Activated naive CD4-positive, alpha-beta T cell treated with anti-CD3 and anti-CD28 coated beads for 36 hours (primary cell): ENCODE measurements at regions of chr14 and their contacts with region 1.

Region 1: DNA sequence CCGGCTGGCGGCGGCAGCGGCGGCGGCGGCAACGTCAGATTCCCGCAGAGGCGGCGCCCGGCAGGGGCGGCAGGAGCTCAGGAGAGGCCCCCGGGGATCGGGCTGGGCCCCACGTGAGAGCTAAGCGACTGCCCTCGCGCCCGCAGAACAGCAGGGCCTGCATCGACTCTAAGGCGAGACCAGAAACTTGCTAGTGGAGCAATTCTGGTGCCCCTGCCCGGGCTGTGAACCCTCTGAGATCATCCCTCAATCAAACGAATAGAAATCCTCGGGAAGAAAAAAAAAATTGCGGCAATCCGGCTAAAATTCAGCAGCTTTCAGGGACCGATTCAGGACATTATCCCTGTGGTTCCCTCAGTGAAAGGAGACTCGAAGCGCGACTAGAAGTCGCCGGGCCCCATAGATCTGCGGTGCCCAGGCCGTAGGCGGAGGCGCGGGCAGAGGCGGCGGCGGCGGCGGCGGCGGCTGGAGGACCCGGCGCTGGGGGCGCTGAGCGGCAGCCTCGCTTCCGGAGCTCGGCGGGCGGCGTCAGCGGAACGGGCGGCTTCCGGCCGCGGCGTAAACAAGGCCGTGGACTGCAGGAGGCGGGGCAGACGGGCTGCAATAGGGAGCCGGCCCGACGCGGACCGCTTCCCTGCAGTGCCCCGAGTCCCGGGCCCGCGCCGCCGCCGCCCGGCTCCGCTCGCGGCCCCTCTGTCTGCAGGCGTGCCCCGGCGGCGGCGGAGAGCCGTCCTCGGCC is at the start of gene KLHDC2:
- DNase-seq: peak; percentile 91
- H3K4me3 Mint-ChIP-seq: peak within 1 kb of the TSS; percentile 94
- H3K27ac Mint-ChIP-seq: peak within 1 kb of the TSS; percentile 99
- H3K4me1 Mint-ChIP-seq: peaks cover 34% of the 10 kb centered on the region
- H3K27me3 Mint-ChIP-seq: no peaks in the 10 kb centered on the region
- total RNA-seq, gene KLHDC2: 24.3 to 25.0 TPM

Region 2: GRCh38 chr14:49585803-49586672 is 181.7 kb before region 1 on chr14 and contains the start of gene RPS29:
- CTCF ChIA-PET with region 1: no interaction called
- intact Hi-C with region 1: loop called (anchors 1 kb)
- DNase-seq: peak; percentile 99
- H3K4me3 Mint-ChIP-seq: peak within 1 kb of the TSS; percentile 87
- H3K27ac Mint-ChIP-seq: peak within 1 kb of the TSS; percentile 98
- H3K4me1 Mint-ChIP-seq: peaks cover 40% of the 10 kb centered on the region
- H3K27me3 Mint-ChIP-seq: peaks cover 3% of the 10 kb centered on the region
- total RNA-seq, gene RPS29: 1,858 to 2,382 TPM

Region 3: GRCh38 chr14:49620182-49621113 is 147.3 kb before region 1 on chr14 and contains the starts of genes MGAT2 and RPL36AL:
- CTCF ChIA-PET with region 1: interaction called, 5 read pairs
- intact Hi-C with region 1: loop called (anchors 1 kb)
- DNase-seq: peak; percentile 97
- H3K4me3 Mint-ChIP-seq: peak within 1 kb of the TSS; percentile 97
- H3K27ac Mint-ChIP-seq: peak within 1 kb of the TSS; percentile 97
- H3K4me1 Mint-ChIP-seq: peaks cover 52% of the 10 kb centered on the region
- H3K27me3 Mint-ChIP-seq: no peaks in the 10 kb centered on the region
- total RNA-seq, gene MGAT2: 20.6 to 20.7 TPM
- total RNA-seq, gene RPL36AL: 250 to 266 TPM

Region 4: DNA sequence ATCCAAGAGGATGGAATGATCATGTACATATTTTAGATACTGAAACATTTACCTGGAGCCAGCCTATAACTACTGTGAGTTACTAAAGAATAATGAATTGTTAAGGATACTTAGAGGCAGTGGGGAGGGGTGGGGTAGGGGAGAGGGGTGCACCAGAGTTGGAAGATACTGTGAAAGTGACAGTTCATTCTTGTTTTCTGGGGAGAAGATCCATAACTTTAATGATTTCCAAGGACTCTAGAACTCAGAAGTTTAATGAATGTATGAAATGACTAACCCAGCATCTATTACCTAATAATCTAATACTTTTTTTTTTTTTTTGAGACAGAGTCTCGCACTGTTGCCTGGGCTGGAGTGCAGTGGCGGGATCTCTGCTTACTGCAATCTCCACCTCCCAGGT is 10.7 kb after region 1 on chr14:
- CTCF ChIA-PET with region 1: no interaction called
- intact Hi-C with region 1: no loop called
- DNase-seq: no peak
- H3K4me3 Mint-ChIP-seq: no peak overlapping the region
- H3K27ac Mint-ChIP-seq: no peak overlapping the region
- H3K4me1 Mint-ChIP-seq: peaks cover 7% of the 10 kb centered on the region
- H3K27me3 Mint-ChIP-seq: no peaks in the 10 kb centered on the region

Region 5: DNA sequence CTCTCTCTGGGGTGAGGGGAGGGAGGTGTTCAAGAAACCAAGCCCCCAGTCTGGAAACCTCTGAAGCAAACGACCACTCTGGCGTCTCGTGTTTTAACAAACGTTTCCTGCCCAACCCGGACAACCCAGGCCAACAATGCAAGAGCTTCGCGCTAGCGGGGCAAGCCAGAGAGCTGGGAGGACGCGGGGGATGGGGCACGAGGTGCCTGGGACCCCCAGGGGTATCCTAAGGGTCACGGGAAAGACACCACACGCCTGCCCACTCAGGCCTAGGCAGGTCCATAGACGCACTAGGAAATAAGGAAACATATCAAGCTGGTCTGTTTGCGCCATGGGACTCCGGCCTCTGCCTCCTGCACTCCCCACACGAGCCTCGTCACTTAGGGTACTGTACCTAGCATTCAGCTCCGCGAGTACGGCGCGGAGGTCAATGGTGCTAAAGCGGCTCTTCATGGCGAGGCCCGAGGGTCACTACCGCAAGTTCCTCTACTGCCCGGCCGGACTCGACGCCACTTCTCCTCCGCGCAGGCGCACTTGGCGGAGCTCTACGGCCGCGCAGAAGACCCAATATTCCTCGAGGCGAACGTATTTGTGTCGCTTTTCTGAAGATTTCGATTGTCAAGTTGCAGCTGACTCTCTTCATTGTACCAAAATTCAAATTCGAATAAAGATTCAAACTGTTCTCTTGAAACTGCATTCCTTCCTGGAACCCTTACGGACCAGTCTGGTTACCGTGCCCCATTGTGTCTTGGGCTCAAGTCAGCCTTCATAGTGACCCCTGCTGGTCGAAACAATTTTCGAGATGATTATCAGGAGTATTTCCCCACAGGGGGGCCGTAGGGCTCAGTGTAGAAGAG is 84.8 kb after region 1 on chr14 and contains the start of gene NEMF:
- CTCF ChIA-PET with region 1: interaction called, 4 read pairs
- intact Hi-C with region 1: loop called (anchors 1 kb)
- DNase-seq: peak; percentile 90
- H3K4me3 Mint-ChIP-seq: peak within 1 kb of the TSS; percentile 98
- H3K27ac Mint-ChIP-seq: peak within 1 kb of the TSS; percentile 97
- H3K4me1 Mint-ChIP-seq: peaks cover 37% of the 10 kb centered on the region
- H3K27me3 Mint-ChIP-seq: no peaks in the 10 kb centered on the region
- total RNA-seq, gene NEMF: 45.5 to 47.0 TPM

Region 6: DNA sequence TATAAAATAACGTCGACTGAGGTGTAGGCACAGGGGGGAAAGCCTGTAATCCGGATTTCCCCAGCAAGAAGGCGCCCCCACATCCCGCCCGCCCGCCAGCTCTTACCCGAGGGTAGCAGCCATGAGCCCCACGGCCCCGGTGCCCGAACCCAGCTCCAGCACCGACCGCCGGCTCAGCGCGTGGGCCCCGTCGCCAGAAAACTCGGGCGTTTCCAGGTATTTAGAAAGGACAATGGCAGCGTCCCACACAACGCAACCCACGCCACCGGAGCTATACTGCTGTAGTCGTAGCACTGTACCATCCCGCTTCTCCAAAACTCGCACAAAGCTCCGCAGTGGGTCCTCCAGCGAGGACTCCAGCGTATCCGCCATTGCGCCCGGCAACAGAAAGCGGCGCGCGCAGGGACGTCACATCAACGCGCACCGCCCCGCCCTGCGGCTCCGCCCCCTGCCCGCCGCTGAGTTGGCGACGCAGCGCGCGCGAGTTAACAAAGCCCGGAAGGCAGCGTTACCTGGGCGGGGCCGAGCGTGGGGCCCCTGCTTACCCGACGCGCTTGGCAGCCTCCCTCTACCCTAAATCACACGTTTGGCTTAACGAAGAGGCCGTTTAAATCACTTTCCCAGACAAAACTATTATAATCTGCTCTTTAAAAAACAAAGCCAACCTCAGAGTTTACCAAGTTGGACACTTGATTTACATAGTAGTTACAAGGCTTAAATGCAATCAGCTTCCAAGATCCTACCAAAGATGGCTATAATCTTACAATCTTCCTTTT is 348.6 kb after region 1 on chr14 and contains the start of gene VCPKMT:
- CTCF ChIA-PET with region 1: no interaction called
- intact Hi-C with region 1: loop called (anchors 1 kb)
- DNase-seq: peak; percentile 96
- H3K4me3 Mint-ChIP-seq: peak within 1 kb of the TSS; percentile 98
- H3K27ac Mint-ChIP-seq: peak within 1 kb of the TSS; percentile 94
- H3K4me1 Mint-ChIP-seq: peaks cover 32% of the 10 kb centered on the region
- H3K27me3 Mint-ChIP-seq: no peaks in the 10 kb centered on the region
- total RNA-seq, gene VCPKMT: 9.6 to 10.5 TPM

Region 7: GRCh38 chr14:51239813-51240803 is 1472.4 kb after region 1 on chr14 and contains the start of gene TMX1:
- CTCF ChIA-PET with region 1: no interaction called
- intact Hi-C with region 1: loop called (anchors 5 kb)
- DNase-seq: peak; percentile 95
- H3K4me3 Mint-ChIP-seq: no peak within 1 kb of the TSS
- H3K27ac Mint-ChIP-seq: no peak within 1 kb of the TSS
- H3K4me1 Mint-ChIP-seq: peaks cover 28% of the 10 kb centered on the region
- H3K27me3 Mint-ChIP-seq: no peaks in the 10 kb centered on the region
- total RNA-seq, gene TMX1: 59.4 to 59.6 TPM